PC-9 (cell line): ENCODE measurements at regions of chr1 and their contacts with region 1.

Region 1: GRCh38 chr1:231337472-231338269 is at the start of gene EXOC8:
- DNase-seq: peak; percentile 92 to 98
- H3K4me3 ChIP-seq: peak within 1 kb of the TSS; percentile 72
- H3K27ac ChIP-seq: peak within 1 kb of the TSS; percentile 89
- H3K4me1 ChIP-seq: peaks cover 51% of the 10 kb centered on the region
- H3K27me3 ChIP-seq: no peaks in the 10 kb centered on the region
- CTCF ChIP-seq: no peak
- total RNA-seq, gene EXOC8: 11.2 and 12.1 TPM in 2 replicates

Region 2: GRCh38 chr1:231147916-231148315 is 189.8 kb before region 1 on chr1:
- CTCF ChIA-PET with region 1: no interaction called
- POLR2A ChIA-PET with region 1: no interaction called
- intact Hi-C with region 1: no loop called
- DNase-seq: no peak
- H3K4me3 ChIP-seq: no peak overlapping the region
- H3K27ac ChIP-seq: no peak overlapping the region
- H3K4me1 ChIP-seq: no peaks in the 10 kb centered on the region
- H3K27me3 ChIP-seq: peaks cover 39% of the 10 kb centered on the region
- CTCF ChIP-seq: no peak

Region 3: DNA sequence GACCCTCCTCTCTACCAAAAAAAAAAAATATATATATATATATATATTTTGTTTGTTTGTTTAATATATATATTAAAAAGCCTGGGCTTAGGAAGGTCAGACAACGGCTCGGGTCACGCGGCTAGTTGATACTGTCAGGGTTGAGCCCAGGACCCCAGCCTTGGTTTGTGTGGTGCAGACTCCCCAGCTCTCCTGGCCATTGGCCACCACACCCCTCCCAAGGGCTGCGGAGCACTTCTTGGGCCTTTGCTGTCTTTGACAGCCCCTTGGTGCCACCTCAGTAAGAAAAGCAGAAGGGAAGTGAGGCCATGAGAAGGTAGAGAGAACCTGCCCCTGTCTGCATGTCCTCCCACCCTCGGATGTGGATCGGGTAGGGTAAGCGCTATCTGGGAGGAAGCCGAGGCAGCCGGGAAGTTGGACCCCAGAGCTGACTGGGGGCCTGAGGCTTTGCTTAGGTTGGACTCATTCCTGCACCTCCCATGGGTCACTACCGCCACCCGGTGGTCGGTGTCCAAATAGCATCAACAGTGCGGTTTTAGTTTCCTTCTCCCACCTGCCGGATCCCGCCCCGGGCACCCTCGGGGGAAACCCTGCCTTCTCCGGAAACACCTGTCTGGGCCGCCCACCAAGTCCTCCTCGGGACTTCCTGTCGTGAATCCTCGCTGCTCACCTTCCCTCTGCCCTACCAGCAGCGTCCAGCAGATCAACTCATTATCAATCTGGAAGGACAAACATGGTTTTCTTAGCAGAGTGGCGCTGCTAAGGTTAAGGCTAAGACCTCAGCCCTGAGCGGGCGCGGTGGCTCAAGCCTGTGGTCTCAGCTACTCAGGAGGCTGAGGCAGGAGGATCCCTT is 126.4 kb before region 1 on chr1:
- CTCF ChIA-PET with region 1: no interaction called
- POLR2A ChIA-PET with region 1: no interaction called
- intact Hi-C with region 1: no loop called
- DNase-seq: peak; percentile 71 to 88
- H3K4me3 ChIP-seq: peak overlapping the region; percentile 52
- H3K27ac ChIP-seq: no peak overlapping the region
- H3K4me1 ChIP-seq: no peaks in the 10 kb centered on the region
- H3K27me3 ChIP-seq: peaks cover 20% of the 10 kb centered on the region
- CTCF ChIP-seq: peak; percentile 95

Region 4: GRCh38 chr1:231240883-231241735 is 96.6 kb before region 1 on chr1 and contains the start of gene GNPAT:
- CTCF ChIA-PET with region 1: no interaction called
- POLR2A ChIA-PET with region 1: interaction called, 4 read pairs
- intact Hi-C with region 1: loop called (anchors 2 kb)
- DNase-seq: peak; percentile 75 to 89
- H3K4me3 ChIP-seq: peak within 1 kb of the TSS; percentile 98
- H3K27ac ChIP-seq: peak within 1 kb of the TSS; percentile 46; the same call in 1 of the 2 replicates
- H3K4me1 ChIP-seq: peaks cover 19% of the 10 kb centered on the region
- H3K27me3 ChIP-seq: no peaks in the 10 kb centered on the region
- CTCF ChIP-seq: no peak
- total RNA-seq, gene GNPAT: 21.8 and 22.3 TPM in 2 replicates

Region 5: DNA sequence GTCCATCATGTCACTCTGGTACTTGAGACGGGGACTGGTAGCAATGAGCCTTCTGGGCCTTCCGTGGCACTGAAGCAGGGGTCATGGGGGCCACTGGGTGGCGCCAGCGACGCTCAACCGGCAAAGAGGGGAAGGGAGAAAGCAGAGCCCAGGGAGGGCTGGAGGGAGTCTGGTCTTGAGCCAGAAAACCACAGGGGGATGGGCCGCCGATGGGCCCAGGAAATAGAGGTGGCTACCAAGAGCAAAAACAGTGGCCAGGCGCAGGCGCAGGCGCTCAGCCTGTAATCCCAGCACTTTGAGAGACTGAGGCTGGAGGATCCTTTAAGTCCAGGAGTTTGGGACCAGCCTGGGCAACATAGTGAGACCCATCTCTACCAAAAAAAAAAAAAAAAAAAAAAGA is 21.8 kb before region 1 on chr1:
- CTCF ChIA-PET with region 1: interaction called, 10 read pairs
- POLR2A ChIA-PET with region 1: no interaction called
- intact Hi-C with region 1: no loop called
- DNase-seq: peak in 1 of 2 experiments; percentile 11
- H3K4me3 ChIP-seq: no peak overlapping the region
- H3K27ac ChIP-seq: no peak overlapping the region
- H3K4me1 ChIP-seq: no peaks in the 10 kb centered on the region
- H3K27me3 ChIP-seq: no peaks in the 10 kb centered on the region
- CTCF ChIP-seq: peak; percentile 52; the same call in 1 of the 2 replicates

Region 6: GRCh38 chr1:231376875-231377549 is 39.3 kb after region 1 on chr1:
- CTCF ChIA-PET with region 1: no interaction called
- POLR2A ChIA-PET with region 1: no interaction called
- intact Hi-C with region 1: no loop called
- DNase-seq: no peak
- H3K4me3 ChIP-seq: no peak overlapping the region
- H3K27ac ChIP-seq: no peak overlapping the region
- H3K4me1 ChIP-seq: no peaks in the 10 kb centered on the region
- H3K27me3 ChIP-seq: no peaks in the 10 kb centered on the region
- CTCF ChIP-seq: no peak

Region 7: DNA sequence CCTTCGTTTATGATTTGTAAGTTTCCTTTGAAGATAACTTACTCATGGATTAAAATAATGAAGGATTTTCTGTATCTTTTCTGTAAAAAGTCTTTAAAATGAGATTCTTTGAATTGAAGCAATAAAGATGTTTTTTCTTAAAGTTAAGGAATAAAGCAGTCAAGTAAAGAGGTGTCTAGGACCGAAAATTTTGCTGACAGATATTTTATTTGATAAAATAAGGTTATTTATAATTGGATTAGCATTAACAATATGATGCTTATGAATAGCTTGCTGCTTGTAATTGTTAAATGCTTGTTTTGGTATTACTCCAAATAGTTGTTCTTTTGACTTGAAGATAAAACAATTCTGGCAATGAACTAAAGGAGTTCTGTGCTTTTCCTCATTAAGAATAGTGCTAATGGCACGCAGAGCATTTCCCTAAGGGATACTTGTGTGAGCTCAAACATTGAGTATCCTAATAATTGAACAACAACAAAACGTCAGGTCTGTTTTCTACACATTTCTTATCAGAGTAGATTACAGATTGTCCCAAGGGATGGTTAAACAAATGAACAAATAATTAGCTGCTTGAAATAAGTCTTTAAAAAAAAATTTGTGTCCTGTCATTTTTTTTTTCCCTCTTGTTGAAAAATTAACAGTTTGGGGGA is 207.4 kb after region 1 on chr1:
- CTCF ChIA-PET with region 1: no interaction called
- POLR2A ChIA-PET with region 1: interaction called, 10 read pairs
- intact Hi-C with region 1: no loop called
- DNase-seq: no peak
- H3K4me3 ChIP-seq: no peak overlapping the region
- H3K27ac ChIP-seq: no peak overlapping the region
- H3K4me1 ChIP-seq: no peaks in the 10 kb centered on the region
- H3K27me3 ChIP-seq: no peaks in the 10 kb centered on the region
- CTCF ChIP-seq: no peak